Natural killer cell (primary cell): ENCODE measurements at regions of chr11 and their contacts with region 1.

Region 1: DNA sequence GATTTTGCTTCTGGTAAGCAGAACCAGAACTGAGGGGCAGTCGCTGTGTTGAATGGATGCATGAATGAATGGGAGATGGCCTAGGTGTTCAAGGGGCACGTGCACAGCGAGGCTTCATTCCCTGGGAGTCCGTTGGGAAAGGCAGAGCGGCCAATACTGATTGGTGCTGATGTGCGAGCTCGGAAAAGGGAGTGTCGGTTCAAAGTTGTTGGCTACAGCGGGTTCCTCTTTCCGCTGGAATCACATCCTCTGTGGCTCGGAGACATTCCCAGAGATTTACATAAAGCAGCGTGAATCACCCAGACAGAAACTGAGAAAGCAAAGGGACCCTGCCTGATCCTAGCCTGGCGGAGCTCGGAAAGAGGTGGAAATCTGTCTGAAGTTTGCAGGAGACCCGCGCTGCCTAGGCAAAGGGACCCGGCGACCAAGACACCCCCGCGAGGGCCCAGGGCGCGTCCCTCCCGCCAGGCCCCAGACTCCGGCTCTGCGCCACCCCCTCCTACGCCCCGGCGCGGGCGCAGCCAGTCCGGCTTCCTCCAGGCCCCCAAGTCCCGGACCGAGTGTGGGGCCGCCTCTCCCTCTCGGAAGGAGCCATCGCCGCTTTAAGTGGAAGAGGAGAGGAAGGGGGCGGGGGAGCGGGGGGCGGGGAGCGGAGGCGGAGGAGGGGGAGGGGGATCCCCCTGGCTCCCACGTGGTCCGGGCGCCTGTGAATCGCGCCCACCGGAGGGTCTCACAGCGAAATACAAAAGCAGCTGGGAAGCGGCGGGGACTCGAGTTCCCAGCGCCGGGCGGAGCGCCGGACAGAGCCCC is at the start of gene FJX1:
- DNase-seq: peak in 1 of 2 donors; percentile 8
- ATAC-seq: peak in 2 of 3 donors; percentile 20 to 24
- H3K4me3 ChIP-seq: no peak within 1 kb of the TSS
- H3K4me3 Mint-ChIP-seq: peak within 1 kb of the TSS; percentile 83
- H3K27ac ChIP-seq: no peak within 1 kb of the TSS
- H3K27ac Mint-ChIP-seq: no peak within 1 kb of the TSS
- H3K4me1 ChIP-seq: peaks cover 17% of the 10 kb centered on the region
- H3K4me1 Mint-ChIP-seq: peaks cover 3 to 5% of the 10 kb centered on the region in 2 donors
- H3K27me3 ChIP-seq: peaks cover 28% of the 10 kb centered on the region
- H3K27me3 Mint-ChIP-seq: peaks cover 45 to 82% of the 10 kb centered on the region in 2 donors
- CTCF ChIP-seq: no peak
- total RNA-seq, gene FJX1: not detected

Region 2: DNA sequence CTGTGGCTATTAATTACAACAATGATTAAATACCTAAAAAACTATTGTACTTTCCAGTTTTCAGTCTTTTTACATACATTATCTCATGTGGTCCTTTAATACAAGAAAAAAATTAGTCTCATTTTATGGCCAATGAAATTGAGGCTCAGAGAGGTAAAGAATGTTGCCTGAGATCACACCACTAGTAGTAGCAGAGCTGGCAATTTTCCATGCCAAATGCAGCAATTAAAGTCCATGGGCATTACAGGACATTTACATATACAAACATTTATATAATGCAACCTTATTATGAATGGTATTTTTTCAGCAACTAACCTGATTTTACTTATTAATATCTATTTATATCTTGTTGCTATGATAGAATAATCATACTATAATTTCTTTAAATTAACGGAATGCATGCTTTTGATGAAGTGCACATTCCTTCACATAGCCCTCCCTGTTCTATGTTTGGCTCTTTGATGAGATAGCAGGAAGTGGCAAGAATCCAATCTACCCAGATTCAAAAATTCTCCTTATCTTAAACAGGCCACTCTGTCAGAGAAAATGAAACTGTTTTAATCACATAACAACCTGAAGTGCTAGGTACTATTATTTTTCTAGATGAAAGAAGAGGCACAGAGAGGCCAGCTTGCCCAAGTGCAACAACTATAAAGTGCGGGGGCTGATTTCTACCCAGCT is 205.1 kb after region 1 on chr11:
- intact Hi-C with region 1: loop called (anchors 2 kb)
- DNase-seq: no peak
- ATAC-seq: no peak
- H3K4me3 ChIP-seq: no peak overlapping the region
- H3K4me3 Mint-ChIP-seq: no peak overlapping the region
- H3K27ac ChIP-seq: no peak overlapping the region
- H3K27ac Mint-ChIP-seq: no peak overlapping the region
- H3K4me1 ChIP-seq: peaks cover 9% of the 10 kb centered on the region
- H3K4me1 Mint-ChIP-seq: peaks cover 12 to 14% of the 10 kb centered on the region in 2 donors
- H3K27me3 ChIP-seq: no peaks in the 10 kb centered on the region
- H3K27me3 Mint-ChIP-seq: peaks cover 0 to 3% of the 10 kb centered on the region in 2 donors
- CTCF ChIP-seq: no peak

Region 3: DNA sequence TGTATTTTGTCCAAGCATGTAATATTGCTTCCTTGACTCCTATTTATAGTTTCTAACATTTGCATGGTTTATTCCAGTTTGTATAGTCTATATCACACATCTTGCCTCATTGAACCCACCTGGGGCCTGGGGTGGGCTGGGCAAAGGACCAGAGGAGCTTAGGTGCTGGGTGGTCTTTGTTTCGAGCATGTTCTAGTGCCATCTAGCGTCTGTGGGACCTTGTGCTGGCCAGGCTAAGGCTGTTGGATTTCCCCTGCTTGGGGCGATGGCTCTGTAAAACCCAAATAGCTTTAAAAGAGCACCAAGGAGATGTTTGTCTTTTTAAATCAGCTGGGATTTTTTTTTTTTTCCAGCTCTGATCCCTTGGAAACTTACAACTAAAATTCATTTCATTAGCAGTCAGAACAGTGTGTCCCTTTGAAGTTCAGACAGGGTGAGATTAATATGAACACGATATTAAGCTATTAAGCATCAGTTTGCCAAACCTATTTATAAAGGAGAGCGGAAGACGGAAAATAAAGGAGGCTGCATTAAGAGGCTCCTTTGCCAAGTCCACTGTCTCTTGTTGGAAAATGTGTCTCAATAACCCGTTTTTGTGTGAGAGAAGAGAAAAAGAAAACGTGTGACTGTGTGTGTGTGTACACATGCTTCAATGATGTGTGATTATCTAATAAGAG is 514.0 kb after region 1 on chr11:
- intact Hi-C with region 1: loop called (anchors 1 kb)
- DNase-seq: peak in 1 of 2 donors; percentile 11
- ATAC-seq: no peak
- H3K4me3 ChIP-seq: no peak overlapping the region
- H3K4me3 Mint-ChIP-seq: no peak overlapping the region
- H3K27ac ChIP-seq: no peak overlapping the region
- H3K27ac Mint-ChIP-seq: no peak overlapping the region
- H3K4me1 ChIP-seq: no peaks in the 10 kb centered on the region
- H3K4me1 Mint-ChIP-seq: no peaks in the 10 kb centered on the region
- H3K27me3 ChIP-seq: no peaks in the 10 kb centered on the region
- H3K27me3 Mint-ChIP-seq: peaks cover 10 to 14% of the 10 kb centered on the region in 2 donors
- CTCF ChIP-seq: no peak

Region 4: DNA sequence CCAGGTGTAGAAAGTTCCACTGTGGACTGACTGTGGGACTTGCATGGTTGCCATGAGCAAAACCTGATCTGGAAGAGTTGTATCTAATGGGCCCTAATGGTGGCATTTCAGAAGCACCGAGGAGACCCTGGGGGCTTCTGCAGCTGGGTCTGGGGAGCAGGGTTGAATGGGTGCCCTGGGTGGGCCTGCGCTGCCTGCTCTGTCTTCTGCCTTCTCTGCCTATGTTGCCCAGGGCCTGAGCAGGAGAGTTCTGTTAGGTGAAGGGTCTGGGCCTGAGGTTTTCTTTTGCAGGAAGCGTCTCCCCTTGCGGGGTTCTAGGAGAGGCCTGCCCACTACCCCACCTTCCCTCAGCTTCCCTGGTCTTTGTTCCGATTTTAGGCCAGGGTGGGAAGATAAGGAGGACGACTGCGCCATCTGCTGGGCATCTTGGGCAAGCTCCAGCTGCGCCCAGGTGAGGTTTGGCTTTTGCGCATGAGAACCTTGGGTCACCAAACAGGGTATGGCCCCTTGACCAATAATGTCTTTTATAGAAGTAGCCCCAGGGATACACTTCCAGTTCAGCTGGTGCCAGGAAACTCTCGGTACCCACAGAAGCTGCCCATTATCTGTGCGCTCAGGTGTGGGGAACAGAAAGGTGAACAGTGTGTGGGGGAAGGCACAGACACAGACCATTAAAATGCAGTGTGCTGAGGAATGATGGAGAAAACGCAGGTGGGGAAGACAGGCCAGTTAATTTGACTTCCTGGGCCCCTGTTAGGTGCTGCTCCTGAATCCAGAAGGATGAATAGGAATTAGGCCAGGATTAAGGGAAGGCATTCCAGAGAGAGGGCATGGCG is 648.1 kb after region 1 on chr11:
- intact Hi-C with region 1: loop called (anchors 1 kb)
- DNase-seq: peak; percentile 40 to 74
- ATAC-seq: peak; percentile 55 to 80 (median 57)
- H3K4me3 ChIP-seq: no peak overlapping the region
- H3K4me3 Mint-ChIP-seq: no peak overlapping the region
- H3K27ac ChIP-seq: no peak overlapping the region
- H3K27ac Mint-ChIP-seq: no peak overlapping the region
- H3K4me1 ChIP-seq: no peaks in the 10 kb centered on the region
- H3K4me1 Mint-ChIP-seq: no peaks in the 10 kb centered on the region
- H3K27me3 ChIP-seq: peaks cover 2% of the 10 kb centered on the region
- H3K27me3 Mint-ChIP-seq: peaks cover 14 to 19% of the 10 kb centered on the region in 2 donors
- CTCF ChIP-seq: peak; percentile 67

Region 5: GRCh38 chr11:36478700-36479329 is 860.9 kb after region 1 on chr11:
- intact Hi-C with region 1: loop called (anchors 5 kb)
- DNase-seq: peak in 1 of 2 donors; percentile 68
- ATAC-seq: peak; percentile 57 to 65 (median 59)
- H3K4me3 ChIP-seq: no peak overlapping the region
- H3K4me3 Mint-ChIP-seq: no peak overlapping the region
- H3K27ac ChIP-seq: no peak overlapping the region
- H3K27ac Mint-ChIP-seq: peak overlapping the region in 1 of 2 donors; percentile 63
- H3K4me1 ChIP-seq: peaks cover 6% of the 10 kb centered on the region
- H3K4me1 Mint-ChIP-seq: peaks cover 8 to 14% of the 10 kb centered on the region in 2 donors
- H3K27me3 ChIP-seq: no peaks in the 10 kb centered on the region
- H3K27me3 Mint-ChIP-seq: no peaks in the 10 kb centered on the region
- CTCF ChIP-seq: peak; percentile 58

Region 6: DNA sequence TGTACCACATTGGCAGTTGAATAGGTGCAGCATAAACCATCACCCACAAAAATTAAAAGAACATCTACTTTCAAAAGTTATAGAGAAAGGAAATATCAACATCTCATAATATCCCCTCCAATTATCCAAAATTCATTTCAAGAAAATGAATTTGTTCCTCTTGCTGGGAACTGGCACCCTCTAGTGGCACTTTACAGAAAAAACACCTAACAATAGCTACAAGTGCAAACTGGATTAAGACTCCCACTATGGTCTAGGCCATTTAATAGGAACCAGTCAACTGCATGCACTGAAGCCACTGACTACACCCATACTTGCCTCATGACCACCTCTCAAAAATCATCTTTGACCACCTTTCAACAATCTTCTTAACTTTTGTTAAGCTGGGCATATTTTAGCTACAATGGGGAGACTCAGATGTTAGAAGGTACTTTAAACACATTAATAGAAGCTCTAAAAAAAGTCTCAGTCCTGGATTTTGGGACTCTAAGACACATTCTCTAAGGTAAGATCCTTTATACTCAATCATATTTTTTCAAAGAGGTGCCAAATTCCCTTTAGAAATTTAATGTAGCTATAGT is 874.9 kb after region 1 on chr11:
- intact Hi-C with region 1: loop called (anchors 1 kb)
- DNase-seq: peak in 1 of 2 donors; percentile 81
- ATAC-seq: peak; percentile 72 to 79 (median 75)
- H3K4me3 ChIP-seq: no peak overlapping the region
- H3K4me3 Mint-ChIP-seq: no peak overlapping the region
- H3K27ac ChIP-seq: no peak overlapping the region
- H3K27ac Mint-ChIP-seq: peak overlapping the region; percentile 62 to 68
- H3K4me1 ChIP-seq: peaks cover 5% of the 10 kb centered on the region
- H3K4me1 Mint-ChIP-seq: peaks cover 25 to 29% of the 10 kb centered on the region in 2 donors
- H3K27me3 ChIP-seq: no peaks in the 10 kb centered on the region
- H3K27me3 Mint-ChIP-seq: no peaks in the 10 kb centered on the region
- CTCF ChIP-seq: peak; percentile 86